Body of pancreas (tissue), 4 donors: ENCODE measurements at regions of chr1 and their contacts with region 1.

Region 1: GRCh38 chr1:118151312-118151937 is 33.6 kb downstream of the SPAG17 start:
- DNase-seq: peak; percentile 70 to 78 (median 74)
- ATAC-seq: no peak
- H3K4me3 ChIP-seq: no peak overlapping the region
- H3K27ac ChIP-seq: no peak overlapping the region
- H3K4me1 ChIP-seq: peaks cover 5% of the 10 kb centered on the region
- H3K27me3 ChIP-seq: no peaks in the 10 kb centered on the region
- CTCF ChIP-seq: peak; percentile 49 to 77 (median 68)
- POLR2A ChIP-seq: no peak

Region 2: GRCh38 chr1:118077331-118078055 is 73.9 kb before region 1 on chr1:
- intact Hi-C with region 1: loop called (anchors 10 kb)
- DNase-seq: peak; percentile 26 to 55 (median 37)
- ATAC-seq: peak; percentile 68
- H3K4me3 ChIP-seq: no peak overlapping the region
- H3K27ac ChIP-seq: no peak overlapping the region
- H3K4me1 ChIP-seq: no peaks in the 10 kb centered on the region
- H3K27me3 ChIP-seq: no peaks in the 10 kb centered on the region
- CTCF ChIP-seq: peak; percentile 52 to 73 (median 66)
- POLR2A ChIP-seq: no peak